ENCODE measurements at regions of chr12 and their contacts with region 1.

Region 1: DNA sequence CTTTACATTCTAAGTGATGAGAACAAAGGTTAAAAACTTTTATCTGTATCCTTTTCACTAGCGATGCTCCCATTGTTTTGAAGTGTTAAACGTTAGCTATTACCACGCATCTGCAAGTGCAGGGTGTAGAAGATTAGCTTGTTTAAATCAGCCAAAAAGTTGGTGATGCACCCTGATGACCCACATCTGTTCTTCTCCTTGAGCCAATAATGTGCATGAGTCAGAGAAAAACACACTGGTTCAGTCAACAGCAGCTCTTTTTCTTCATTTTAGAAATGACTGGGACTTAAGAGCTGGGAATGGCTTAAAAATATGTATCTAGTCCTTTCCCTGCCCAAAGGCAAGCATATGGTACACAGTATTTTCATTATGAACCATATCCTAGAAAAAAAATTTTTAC is 323.5 kb upstream of the PDE3A start:
- DNase-seq: no peak
- H3K4me3 Mint-ChIP-seq: no peak overlapping the region
- H3K27ac Mint-ChIP-seq: no peak overlapping the region
- H3K4me1 Mint-ChIP-seq: no peaks in the 10 kb centered on the region
- H3K27me3 Mint-ChIP-seq: peaks cover 24% of the 10 kb centered on the region
- CTCF ChIP-seq: no peak

Region 2: GRCh38 chr12:19938031-19938430 is 106.8 kb before region 1 on chr12:
- CTCF ChIA-PET with region 1: no interaction called
- POLR2A ChIA-PET with region 1: no interaction called
- intact Hi-C with region 1: no loop called
- DNase-seq: no peak
- H3K4me3 Mint-ChIP-seq: no peak overlapping the region
- H3K27ac Mint-ChIP-seq: no peak overlapping the region
- H3K4me1 Mint-ChIP-seq: no peaks in the 10 kb centered on the region
- H3K27me3 Mint-ChIP-seq: peaks cover 37% of the 10 kb centered on the region
- CTCF ChIP-seq: no peak

Region 3: GRCh38 chr12:20004952-20005351 is 39.9 kb before region 1 on chr12:
- CTCF ChIA-PET with region 1: no interaction called
- POLR2A ChIA-PET with region 1: no interaction called
- intact Hi-C with region 1: loop called (anchors 1 kb)
- DNase-seq: no peak
- H3K4me3 Mint-ChIP-seq: no peak overlapping the region
- H3K27ac Mint-ChIP-seq: no peak overlapping the region
- H3K4me1 Mint-ChIP-seq: no peaks in the 10 kb centered on the region
- H3K27me3 Mint-ChIP-seq: peaks cover 10% of the 10 kb centered on the region
- CTCF ChIP-seq: no peak